ENCODE measurements at regions of chr6 and their contacts with region 1.

Region 1: GRCh38 chr6:151620179-151620578 is 126.4 kb downstream of the CCDC170 start:
- DNase-seq: no peak
- H3K4me3 Mint-ChIP-seq: no peak overlapping the region
- H3K27ac Mint-ChIP-seq: no peak overlapping the region
- H3K4me1 Mint-ChIP-seq: no peaks in the 10 kb centered on the region
- H3K27me3 Mint-ChIP-seq: peaks cover 23% of the 10 kb centered on the region

Region 2: GRCh38 chr6:151488226-151488625 is 132.0 kb before region 1 on chr6:
- CTCF ChIA-PET with region 1: no interaction called
- intact Hi-C with region 1: loop called (anchors 5 kb)
- DNase-seq: no peak
- H3K4me3 Mint-ChIP-seq: no peak overlapping the region
- H3K27ac Mint-ChIP-seq: no peak overlapping the region
- H3K4me1 Mint-ChIP-seq: peaks cover 6% of the 10 kb centered on the region
- H3K27me3 Mint-ChIP-seq: peaks cover 7% of the 10 kb centered on the region